Mammary epithelial cell (primary cell): ENCODE measurements at regions of chr7 and their contacts with region 1.

Region 1: GRCh38 chr7:129689995-129690581 is 78.6 kb downstream of the NRF1 start:
- DNase-seq: no peak
- H3K4me3 ChIP-seq: no peak overlapping the region
- H3K27ac ChIP-seq: no peak overlapping the region
- H3K4me1 ChIP-seq: peaks cover 3% of the 10 kb centered on the region
- H3K27me3 ChIP-seq: no peaks in the 10 kb centered on the region
- CTCF ChIP-seq: no peak

Region 2: GRCh38 chr7:129755555-129755954 is 65.5 kb after region 1 on chr7:
- CTCF ChIA-PET with region 1: no interaction called
- dilution Hi-C with region 1: loop called (anchors 5 kb)
- in situ Hi-C with region 1: no loop called
- intact Hi-C with region 1: no loop called
- DNase-seq: no peak
- H3K4me3 ChIP-seq: no peak overlapping the region
- H3K27ac ChIP-seq: no peak overlapping the region
- H3K4me1 ChIP-seq: peaks cover 10% of the 10 kb centered on the region
- H3K27me3 ChIP-seq: no peaks in the 10 kb centered on the region
- CTCF ChIP-seq: no peak

Region 3: GRCh38 chr7:129797214-129797789 is 107.2 kb after region 1 on chr7:
- CTCF ChIA-PET with region 1: no interaction called
- dilution Hi-C with region 1: loop called (anchors 5 kb)
- in situ Hi-C with region 1: no loop called
- intact Hi-C with region 1: no loop called
- DNase-seq: no peak
- H3K4me3 ChIP-seq: no peak overlapping the region
- H3K27ac ChIP-seq: no peak overlapping the region
- H3K4me1 ChIP-seq: no peaks in the 10 kb centered on the region
- H3K27me3 ChIP-seq: no peaks in the 10 kb centered on the region
- CTCF ChIP-seq: no peak

Region 4: DNA sequence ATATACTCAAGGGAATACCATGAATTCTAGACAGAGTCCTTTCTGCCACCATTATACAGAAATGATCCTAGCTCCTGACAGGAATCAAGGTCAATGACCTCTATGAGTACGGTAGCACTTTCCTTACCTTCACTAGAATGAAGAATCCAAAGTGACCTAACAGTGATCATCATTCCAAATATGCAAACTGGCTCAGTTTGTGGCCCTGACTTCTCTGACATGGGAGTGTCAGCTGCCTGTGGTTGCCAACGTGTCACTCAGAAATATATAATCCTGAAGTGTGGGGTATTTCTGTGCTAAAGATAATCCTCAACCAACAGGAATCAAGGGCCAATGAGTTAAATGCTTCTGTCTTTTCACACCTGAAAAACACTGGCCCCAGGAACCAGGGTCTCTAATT is 932.8 kb after region 1 on chr7:
- CTCF ChIA-PET with region 1: no interaction called
- dilution Hi-C with region 1: no loop called
- in situ Hi-C with region 1: no loop called
- intact Hi-C with region 1: no loop called
- DNase-seq: no peak
- H3K4me3 ChIP-seq: no peak overlapping the region
- H3K27ac ChIP-seq: no peak overlapping the region
- H3K4me1 ChIP-seq: no peaks in the 10 kb centered on the region
- H3K27me3 ChIP-seq: no peaks in the 10 kb centered on the region
- CTCF ChIP-seq: no peak